T-cell (primary cell): ENCODE measurements at regions of chr2 and their contacts with region 1.

Region 1: DNA sequence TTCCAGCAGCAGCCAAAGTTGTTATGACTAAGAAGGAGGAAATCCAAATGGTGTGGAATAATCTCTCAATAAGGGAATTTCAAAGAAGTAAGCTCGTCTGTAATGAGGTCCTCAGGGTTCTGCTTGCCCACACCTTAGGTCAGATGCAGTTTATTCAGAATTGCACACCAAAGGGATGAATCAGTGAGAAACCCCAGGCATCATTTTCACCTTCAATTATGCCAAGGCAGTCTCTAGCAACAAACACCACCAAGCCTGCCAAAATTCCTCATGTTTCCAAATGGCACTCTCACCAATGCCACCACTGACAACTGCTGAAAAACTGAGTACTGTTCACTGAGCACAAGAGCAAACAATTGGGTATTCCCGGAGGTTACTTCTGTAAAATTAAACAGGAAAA is 43.6 kb downstream of the KCNG3 start:
- DNase-seq: no peak
- ATAC-seq: no peak
- H3K4me3 ChIP-seq: no peak overlapping the region
- H3K4me3 Mint-ChIP-seq: no peak overlapping the region
- H3K27ac ChIP-seq: no peak overlapping the region
- H3K27ac Mint-ChIP-seq: no peak overlapping the region
- H3K4me1 ChIP-seq: no peaks in the 10 kb centered on the region
- H3K4me1 Mint-ChIP-seq: no peaks in the 10 kb centered on the region
- H3K27me3 ChIP-seq: peaks cover 0 to 4% of the 10 kb centered on the region in 2 experiments
- H3K27me3 Mint-ChIP-seq: peaks cover 0 to 3% of the 10 kb centered on the region in 2 donors

Region 2: DNA sequence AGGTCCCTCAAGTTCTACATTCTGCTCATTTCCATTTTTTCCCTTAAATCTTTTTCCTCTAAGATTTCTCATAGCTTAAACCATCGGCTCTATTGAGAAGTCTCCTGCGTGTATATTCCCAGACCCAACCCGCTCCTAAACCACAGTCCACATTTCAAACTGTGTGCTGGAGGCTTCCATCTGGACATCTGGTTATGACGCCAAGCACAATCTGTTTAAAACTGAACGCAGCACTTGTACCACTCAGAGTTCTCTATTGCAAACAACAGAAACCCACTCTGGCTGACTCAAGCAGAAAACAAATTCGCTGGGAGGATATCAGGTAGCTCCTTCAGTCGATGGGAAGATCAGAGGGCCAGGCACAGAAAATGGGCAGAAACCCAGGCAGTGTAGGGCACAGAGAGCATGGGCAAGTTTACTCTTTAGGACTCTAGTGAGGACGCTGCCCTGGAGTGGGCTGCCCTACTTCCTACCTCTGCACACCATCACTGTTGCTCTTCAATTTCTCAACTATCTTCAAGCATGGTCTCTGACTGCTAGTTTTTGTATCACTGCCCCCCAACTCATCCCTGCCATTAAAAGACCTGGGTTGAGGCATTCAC is 286.6 kb before region 1 on chr2:
- CTCF ChIA-PET with region 1: no interaction called
- POLR2A ChIA-PET with region 1: no interaction called
- DNase-seq: no peak
- ATAC-seq: no peak
- H3K4me3 ChIP-seq: no peak overlapping the region
- H3K4me3 Mint-ChIP-seq: no peak overlapping the region
- H3K27ac ChIP-seq: no peak overlapping the region
- H3K27ac Mint-ChIP-seq: no peak overlapping the region
- H3K4me1 ChIP-seq: peaks cover under 1 to 2% of the 10 kb centered on the region in 2 experiments
- H3K4me1 Mint-ChIP-seq: peaks cover 2 to 14% (median 6%) of the 10 kb centered on the region in 3 donors
- H3K27me3 ChIP-seq: no peaks in the 10 kb centered on the region
- H3K27me3 Mint-ChIP-seq: no peaks in the 10 kb centered on the region

Region 3: GRCh38 chr2:42438685-42439084 is 11.5 kb before region 1 on chr2:
- CTCF ChIA-PET with region 1: no interaction called
- POLR2A ChIA-PET with region 1: no interaction called
- DNase-seq: no peak
- ATAC-seq: no peak
- H3K4me3 ChIP-seq: no peak overlapping the region
- H3K4me3 Mint-ChIP-seq: no peak overlapping the region
- H3K27ac ChIP-seq: no peak overlapping the region
- H3K27ac Mint-ChIP-seq: no peak overlapping the region
- H3K4me1 ChIP-seq: no peaks in the 10 kb centered on the region
- H3K4me1 Mint-ChIP-seq: no peaks in the 10 kb centered on the region
- H3K27me3 ChIP-seq: no peaks in the 10 kb centered on the region
- H3K27me3 Mint-ChIP-seq: peaks cover 0 to 9% of the 10 kb centered on the region in 2 donors

Region 4: GRCh38 chr2:42542871-42543270 is 92.7 kb after region 1 on chr2:
- CTCF ChIA-PET with region 1: no interaction called
- POLR2A ChIA-PET with region 1: interaction called in 1 of 2 experiments, 10 read pairs
- DNase-seq: no peak
- ATAC-seq: no peak
- H3K4me3 ChIP-seq: no peak overlapping the region
- H3K4me3 Mint-ChIP-seq: no peak overlapping the region
- H3K27ac ChIP-seq: no peak overlapping the region
- H3K27ac Mint-ChIP-seq: no peak overlapping the region
- H3K4me1 ChIP-seq: peaks cover 0 to 5% of the 10 kb centered on the region in 2 experiments
- H3K4me1 Mint-ChIP-seq: peaks cover 2 to 7% (median 5%) of the 10 kb centered on the region in 3 donors
- H3K27me3 ChIP-seq: no peaks in the 10 kb centered on the region
- H3K27me3 Mint-ChIP-seq: no peaks in the 10 kb centered on the region